ENCODE measurements at regions of chr6 and their contacts with region 1.

Region 1: GRCh38 chr6:33014841-33015634 is 5.6 kb upstream of the HLA-DOA start:
- DNase-seq: peak; percentile 87
- H3K4me3 ChIP-seq: no peak overlapping the region
- H3K27ac ChIP-seq: no peak overlapping the region
- H3K4me1 ChIP-seq: peaks cover 15% of the 10 kb centered on the region
- CTCF ChIP-seq: peak; percentile 94

Region 2: DNA sequence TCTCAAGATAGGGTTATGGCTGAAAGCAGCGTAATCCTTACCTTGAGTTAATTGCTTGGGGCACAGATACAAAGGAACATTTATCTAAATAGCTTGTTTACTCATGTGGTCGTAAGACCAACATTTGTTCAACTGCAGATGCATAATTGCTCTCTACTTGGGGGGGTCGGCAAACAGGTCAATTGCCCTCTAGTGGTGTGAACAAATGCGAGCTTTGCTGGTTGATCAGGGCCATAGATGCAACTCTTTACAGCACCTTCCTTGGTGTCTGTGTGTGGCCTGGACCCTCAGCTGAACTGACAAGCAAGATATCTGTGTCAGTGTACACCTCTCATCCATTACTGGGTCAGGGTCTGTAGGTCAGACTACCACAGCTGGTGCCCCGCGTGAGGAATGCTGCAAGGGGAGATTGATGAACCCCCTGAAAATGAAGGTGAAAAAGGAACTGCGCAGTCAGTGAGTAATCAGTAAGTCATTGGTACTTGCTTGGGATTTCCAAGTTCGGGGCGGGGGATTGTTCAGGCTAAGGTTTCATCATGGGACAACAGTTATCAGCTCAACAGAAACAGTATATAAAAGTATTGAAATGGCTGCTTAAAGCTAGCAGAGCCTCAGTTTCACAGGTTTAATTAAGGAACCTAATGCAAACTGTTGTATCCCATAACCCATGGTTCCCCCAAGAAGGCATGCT is 34.4 kb after region 1 on chr6:
- CTCF ChIA-PET with region 1: no interaction called
- POLR2A ChIA-PET with region 1: interaction called, 3 read pairs
- intact Hi-C with region 1: loop called (anchors 2 kb)
- DNase-seq: peak; percentile 44
- H3K4me3 ChIP-seq: no peak overlapping the region
- H3K27ac ChIP-seq: no peak overlapping the region
- H3K4me1 ChIP-seq: peaks cover 3% of the 10 kb centered on the region
- CTCF ChIP-seq: peak; percentile 81

Region 3: DNA sequence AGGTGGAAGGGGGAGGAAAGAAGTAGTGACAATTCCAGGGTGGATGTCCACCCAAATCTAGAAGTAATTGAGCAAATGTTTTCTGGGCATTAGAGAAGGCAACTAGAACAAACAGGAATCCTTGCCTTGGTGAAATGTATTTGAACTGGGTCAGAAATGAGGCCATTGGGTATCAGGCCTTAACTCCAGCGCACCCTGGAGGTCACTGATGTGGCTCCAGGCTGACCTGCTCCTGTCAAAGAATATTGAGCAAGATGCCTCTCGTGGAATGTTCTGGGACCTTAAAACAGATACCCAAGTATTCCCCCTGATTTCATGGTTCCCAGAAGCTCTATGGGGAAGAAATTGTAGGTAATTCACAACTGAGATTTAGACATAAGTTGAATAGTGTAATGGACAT is 67.7 kb after region 1 on chr6:
- CTCF ChIA-PET with region 1: no interaction called
- POLR2A ChIA-PET with region 1: interaction called, 4 read pairs
- intact Hi-C with region 1: loop called (anchors 1 kb)
- DNase-seq: peak; percentile 59
- H3K4me3 ChIP-seq: no peak overlapping the region
- H3K27ac ChIP-seq: no peak overlapping the region
- H3K4me1 ChIP-seq: peaks cover 15% of the 10 kb centered on the region
- CTCF ChIP-seq: peak; percentile 78

Region 4: DNA sequence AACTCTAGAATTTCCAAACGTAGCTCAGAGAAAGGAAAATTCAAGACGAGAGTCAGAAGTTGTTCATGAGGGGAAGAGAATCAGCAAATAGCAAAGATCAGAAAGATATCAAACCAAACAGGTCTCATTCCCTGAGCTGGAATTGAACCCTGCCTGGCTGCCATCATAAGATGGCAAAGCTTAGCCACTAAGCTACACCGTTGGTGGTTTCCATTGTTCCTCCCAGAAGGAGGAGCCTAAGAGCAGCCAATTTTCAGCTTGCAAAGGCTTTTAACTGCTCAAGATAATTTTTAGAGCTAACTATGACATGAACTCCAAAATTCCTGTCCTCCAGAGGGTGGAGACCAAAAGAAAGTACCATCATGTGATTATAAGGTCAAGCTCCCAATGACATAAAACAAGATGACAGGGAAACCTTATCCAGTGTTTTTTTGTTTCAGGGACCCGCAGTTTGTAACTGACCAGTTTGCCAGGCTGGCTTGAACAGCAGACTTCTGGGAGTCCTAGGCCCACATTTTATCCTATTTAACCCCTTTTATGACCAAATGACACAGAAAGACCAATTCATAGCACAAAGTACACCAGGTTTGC is 121.4 kb after region 1 on chr6:
- CTCF ChIA-PET with region 1: no interaction called
- POLR2A ChIA-PET with region 1: no interaction called
- intact Hi-C with region 1: no loop called
- DNase-seq: no peak
- H3K4me3 ChIP-seq: no peak overlapping the region
- H3K27ac ChIP-seq: no peak overlapping the region
- H3K4me1 ChIP-seq: no peaks in the 10 kb centered on the region
- CTCF ChIP-seq: no peak

Region 5: GRCh38 chr6:33147807-33148666 is 133.0 kb after region 1 on chr6:
- CTCF ChIA-PET with region 1: no interaction called
- POLR2A ChIA-PET with region 1: interaction called, 4 read pairs
- intact Hi-C with region 1: loop called (anchors 5 kb)
- DNase-seq: peak; percentile 45
- H3K4me3 ChIP-seq: no peak overlapping the region
- H3K27ac ChIP-seq: no peak overlapping the region
- H3K4me1 ChIP-seq: no peaks in the 10 kb centered on the region
- CTCF ChIP-seq: peak; percentile 98